ENCODE measurements at regions of chr6 and their contacts with region 1.

Region 1: DNA sequence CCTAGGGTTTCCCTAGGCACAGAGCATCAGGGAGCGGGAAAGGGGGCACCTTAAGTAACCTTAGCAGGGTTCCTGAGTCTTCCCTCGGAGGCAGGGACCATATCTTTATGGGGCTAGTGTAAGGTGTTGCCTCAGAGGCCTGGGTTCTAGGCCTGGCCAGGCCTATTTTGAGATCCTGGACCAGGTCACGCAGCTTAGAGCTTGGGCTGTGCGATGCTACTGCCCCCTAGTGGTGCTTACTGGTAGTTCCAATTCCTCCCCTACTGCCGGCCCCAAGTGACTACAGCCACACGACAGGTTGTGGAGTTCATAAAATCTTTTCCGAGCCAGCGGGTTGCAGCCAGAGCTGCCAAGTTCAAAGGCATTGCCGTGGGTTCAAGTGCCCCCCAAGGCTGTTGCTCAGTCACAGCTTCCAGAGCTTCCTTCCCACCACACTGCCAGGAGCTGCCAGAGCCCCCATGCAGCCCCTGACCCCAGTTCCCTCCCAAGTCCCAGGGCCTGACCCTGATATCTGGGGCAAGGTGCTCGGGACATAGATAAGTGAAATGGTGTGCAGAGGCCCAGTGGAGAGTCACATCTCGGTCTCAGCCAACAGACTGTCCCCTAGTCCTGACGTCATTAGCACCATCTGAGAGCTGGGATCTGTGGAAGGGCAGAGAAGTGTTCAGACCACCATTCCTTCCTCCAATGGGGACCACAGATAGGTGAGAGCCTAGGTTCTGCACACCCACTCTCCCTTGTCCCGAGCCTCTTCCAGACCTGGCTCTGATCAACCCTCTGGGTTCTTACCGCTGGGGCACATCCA is 3.3 kb downstream of the LRRC73 start:
- DNase-seq: peak; percentile 63
- H3K4me3 ChIP-seq: no peak overlapping the region
- CTCF ChIP-seq: peak; percentile 97

Region 2: GRCh38 chr6:43328528-43328927 is 178.3 kb before region 1 on chr6:
- in situ Hi-C with region 1: loop called (anchors 10 kb)
- DNase-seq: no peak
- H3K4me3 ChIP-seq: no peak overlapping the region
- CTCF ChIP-seq: no peak

Region 3: GRCh38 chr6:43461936-43462335 is 44.9 kb before region 1 on chr6:
- in situ Hi-C with region 1: loop called (anchors 5 kb)
- DNase-seq: no peak
- H3K4me3 ChIP-seq: no peak overlapping the region
- CTCF ChIP-seq: no peak

Region 4: DNA sequence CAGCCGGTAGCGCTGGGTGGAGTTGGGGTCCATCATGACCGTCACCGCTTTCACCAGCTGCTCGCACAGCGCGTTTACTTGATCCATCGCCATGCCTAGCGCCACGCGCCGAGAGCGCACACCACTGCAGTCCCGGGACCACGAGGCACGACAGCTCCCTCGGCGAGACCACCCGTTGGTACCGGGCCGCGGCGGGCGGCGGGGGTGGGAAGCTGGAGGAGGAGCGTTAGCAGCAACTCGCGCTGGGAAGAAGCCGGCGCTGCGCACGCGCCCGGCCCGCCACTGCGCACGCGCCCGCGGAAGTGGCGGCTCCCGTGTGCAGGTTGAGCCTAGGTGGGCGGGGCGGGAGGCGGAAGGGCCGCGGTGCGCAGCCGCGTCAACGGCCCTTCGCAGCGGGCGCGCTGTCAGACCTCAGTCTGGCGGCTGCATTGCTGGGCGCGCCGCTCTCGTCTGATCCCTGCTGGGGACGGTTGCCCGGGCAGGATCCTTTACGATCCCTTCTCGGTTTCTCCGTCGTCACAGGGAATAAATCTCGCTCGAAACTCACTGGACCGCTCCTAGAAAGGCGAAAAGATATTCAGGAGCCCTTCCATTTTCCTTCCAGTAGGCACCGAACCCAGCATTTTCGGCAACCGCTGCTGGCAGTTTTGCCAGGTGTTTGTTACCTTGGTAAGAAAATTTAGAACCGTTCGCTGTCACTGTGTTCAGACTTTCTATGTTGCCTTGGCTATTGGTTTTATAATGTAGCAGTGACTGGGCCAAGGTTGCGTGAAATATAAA is 69.1 kb after region 1 on chr6 and contains the starts of genes POLH and XPO5:
- in situ Hi-C with region 1: no loop called
- DNase-seq: peak; percentile 71
- H3K4me3 ChIP-seq: peak within 1 kb of the TSS; percentile 98
- CTCF ChIP-seq: peak; percentile 18

Region 5: GRCh38 chr6:43593938-43594337 is 87.1 kb after region 1 on chr6:
- in situ Hi-C with region 1: no loop called
- DNase-seq: no peak
- H3K4me3 ChIP-seq: no peak overlapping the region
- CTCF ChIP-seq: no peak

Region 6: DNA sequence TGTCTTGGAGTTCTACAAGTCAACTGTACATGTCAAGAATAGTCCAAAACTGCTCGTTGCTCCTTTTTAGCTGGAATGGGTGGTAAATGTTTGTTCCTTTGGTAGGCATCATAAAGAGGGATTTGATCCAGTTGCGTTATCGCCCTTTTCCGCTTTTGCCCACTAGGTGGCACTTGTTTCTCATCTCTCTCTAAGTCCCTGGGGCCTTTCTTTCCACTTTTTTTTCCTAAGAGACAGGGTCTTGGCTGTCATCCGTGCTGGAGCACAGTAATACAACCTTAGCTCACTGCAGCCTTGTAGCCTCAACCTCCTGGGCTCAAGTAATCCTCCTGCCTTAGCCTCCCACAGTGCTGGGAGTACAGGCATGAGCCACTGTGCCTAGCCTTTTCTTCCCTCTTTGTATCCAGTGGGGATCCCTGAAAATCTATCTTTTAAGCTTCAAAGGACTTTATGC is 101.5 kb after region 1 on chr6:
- in situ Hi-C with region 1: no loop called
- DNase-seq: peak; percentile 82
- H3K4me3 ChIP-seq: no peak overlapping the region
- CTCF ChIP-seq: peak; percentile 85

Region 7: DNA sequence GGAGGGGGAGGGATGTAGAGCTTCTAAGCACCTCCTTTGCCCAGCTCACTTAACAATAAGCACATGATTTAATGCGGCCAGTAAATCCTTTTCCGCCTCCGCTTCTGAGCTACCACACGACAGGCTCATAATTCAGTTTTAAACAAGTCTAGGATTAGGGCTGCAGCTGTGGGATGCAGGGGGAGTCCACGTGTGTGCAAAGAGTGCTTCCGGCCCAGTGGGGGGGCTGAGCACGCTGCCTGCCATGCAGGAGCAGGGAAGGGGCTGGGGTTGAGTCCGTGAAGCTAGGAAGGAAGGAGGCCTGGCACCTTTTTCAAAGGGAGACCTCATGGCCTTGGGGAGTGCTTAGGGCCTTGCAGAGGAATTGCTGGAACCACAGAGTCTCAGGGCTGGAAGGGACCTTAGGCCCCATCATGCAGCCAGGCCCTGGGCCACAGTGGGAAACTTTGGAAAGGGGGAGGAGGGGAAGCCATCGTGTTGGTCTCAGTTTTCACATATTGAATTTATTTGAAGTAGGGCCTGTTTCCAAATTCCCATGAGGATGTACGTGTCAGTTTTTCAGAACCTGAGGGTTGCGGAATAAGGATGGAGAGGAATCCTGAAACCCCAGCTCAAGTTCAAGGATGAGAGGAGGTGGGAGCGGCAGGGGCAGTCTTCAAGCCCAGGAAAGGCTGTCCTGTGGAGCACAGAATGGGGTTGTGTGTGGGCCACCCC is 359.2 kb after region 1 on chr6:
- in situ Hi-C with region 1: no loop called
- DNase-seq: no peak
- H3K4me3 ChIP-seq: no peak overlapping the region
- CTCF ChIP-seq: no peak

Measured in astrocyte of the cerebellum (primary cell).